Psoas muscle (tissue), 8 donors: ENCODE measurements at regions of chr4 and their contacts with region 1.

Region 1: GRCh38 chr4:119162174-119162573 is 26.5 kb downstream of the MYOZ2 start:
- DNase-seq: no peak
- ATAC-seq: peak in 2 of 4 donors; percentile 21 to 28
- H3K4me3 ChIP-seq: no peak overlapping the region
- H3K27ac ChIP-seq: peak overlapping the region; percentile 21
- H3K4me1 ChIP-seq: no peaks in the 10 kb centered on the region
- H3K27me3 ChIP-seq: no peaks in the 10 kb centered on the region
- CTCF ChIP-seq: no peak

Region 2: GRCh38 chr4:119244832-119245231 is 82.7 kb after region 1 on chr4:
- intact Hi-C with region 1: no loop called
- DNase-seq: no peak
- ATAC-seq: no peak
- H3K4me3 ChIP-seq: no peak overlapping the region
- H3K27ac ChIP-seq: peak overlapping the region; percentile 36
- H3K4me1 ChIP-seq: peaks cover 47% of the 10 kb centered on the region
- H3K27me3 ChIP-seq: no peaks in the 10 kb centered on the region
- CTCF ChIP-seq: no peak

Region 3: DNA sequence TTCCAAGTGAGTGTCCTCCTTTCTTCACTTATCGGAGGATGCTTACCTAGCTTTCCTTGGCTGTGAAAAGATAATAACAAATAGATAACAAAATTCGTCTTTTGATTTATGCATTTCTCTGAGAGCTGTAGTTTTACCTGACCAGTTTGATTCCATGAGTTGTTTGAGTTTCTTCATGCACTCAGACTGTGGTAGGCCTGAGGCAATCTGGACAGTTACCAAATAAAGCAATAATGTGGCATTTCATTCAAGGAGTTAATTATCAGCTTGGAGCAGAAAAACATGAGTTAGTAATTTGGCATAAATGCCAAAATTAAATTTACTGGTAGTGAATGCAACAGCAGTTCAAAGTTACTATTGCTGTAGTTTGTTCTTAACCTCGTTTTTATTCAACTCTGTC is 106.3 kb after region 1 on chr4:
- intact Hi-C with region 1: loop called in 1 of 2 experiments (anchors 10 kb)
- DNase-seq: no peak
- ATAC-seq: no peak
- H3K4me3 ChIP-seq: no peak overlapping the region
- H3K27ac ChIP-seq: no peak overlapping the region
- H3K4me1 ChIP-seq: peaks cover 3% of the 10 kb centered on the region
- H3K27me3 ChIP-seq: no peaks in the 10 kb centered on the region
- CTCF ChIP-seq: no peak